ENCODE measurements at regions of chr6 and their contacts with region 1.

Region 1: DNA sequence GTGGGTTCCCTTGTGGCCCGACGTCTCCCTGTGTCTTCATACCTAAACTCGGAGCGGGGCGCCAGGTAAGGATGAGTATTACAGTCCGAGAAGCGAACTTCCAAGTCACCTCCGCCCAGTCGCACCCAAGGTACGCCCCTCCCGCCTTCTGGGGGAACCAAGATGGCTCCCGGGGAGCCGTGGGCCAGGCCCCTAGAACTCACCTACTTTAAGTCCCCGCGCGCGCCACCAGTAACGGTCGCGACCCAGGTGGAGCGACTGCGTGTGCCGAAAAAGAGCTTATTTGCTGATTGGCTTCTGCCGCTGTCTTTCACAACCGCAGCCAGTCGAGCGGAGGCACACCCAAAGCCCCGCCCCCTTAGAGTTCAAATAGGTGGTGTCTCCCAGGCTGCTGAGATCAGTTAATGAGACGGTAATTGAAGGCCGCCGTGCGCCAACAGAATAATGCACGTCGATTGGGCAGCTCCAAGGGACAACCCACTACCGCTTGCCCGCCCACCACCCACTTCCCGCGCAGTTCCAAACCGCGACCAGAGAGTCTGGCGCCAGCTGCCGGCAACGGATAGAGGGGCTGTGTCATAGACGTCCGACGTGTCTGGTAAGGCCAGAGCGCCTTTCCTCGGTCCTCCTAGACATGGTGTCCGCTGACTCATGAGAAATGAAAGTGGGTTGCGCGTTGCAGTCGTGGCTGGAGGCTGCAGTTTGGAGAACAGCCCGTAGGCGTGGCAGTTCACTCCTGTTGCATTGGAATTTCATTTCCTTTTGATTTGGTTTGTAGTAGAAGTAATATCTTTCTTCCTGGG is at the start of gene MDC1:
- DNase-seq: peak; percentile 99 to 100
- H3K4me3 ChIP-seq: peak within 1 kb of the TSS; percentile 56
- H3K4me3 Mint-ChIP-seq: peak within 1 kb of the TSS; percentile 95
- H3K27ac Mint-ChIP-seq: peak within 1 kb of the TSS; percentile 100
- H3K4me1 ChIP-seq: peaks cover 10% of the 10 kb centered on the region; the same call in 1 of the 2 replicates
- H3K4me1 Mint-ChIP-seq: peaks cover 14% of the 10 kb centered on the region
- H3K27me3 ChIP-seq: no peaks in the 10 kb centered on the region
- H3K27me3 Mint-ChIP-seq: no peaks in the 10 kb centered on the region
- CTCF ChIP-seq: peak; percentile 17 to 31
- total RNA-seq, gene MDC1: 46.6 and 48.6 TPM in 2 replicates

Region 2: GRCh38 chr6:30212865-30213666 is 504.2 kb before region 1 on chr6 and contains the start of gene TRIM26:
- CTCF ChIA-PET with region 1: no interaction called
- POLR2A ChIA-PET with region 1: no interaction called
- intact Hi-C with region 1: loop called (anchors 5 kb)
- DNase-seq: peak; percentile 98
- H3K4me3 ChIP-seq: peak within 1 kb of the TSS; percentile 90
- H3K4me3 Mint-ChIP-seq: peak within 1 kb of the TSS; percentile 93
- H3K27ac Mint-ChIP-seq: peak within 1 kb of the TSS; percentile 97
- H3K4me1 ChIP-seq: peaks cover 29% of the 10 kb centered on the region
- H3K4me1 Mint-ChIP-seq: peaks cover 26% of the 10 kb centered on the region
- H3K27me3 ChIP-seq: no peaks in the 10 kb centered on the region
- H3K27me3 Mint-ChIP-seq: no peaks in the 10 kb centered on the region
- CTCF ChIP-seq: no peak
- total RNA-seq, gene TRIM26: 48.1 and 49.0 TPM in 2 replicates

Region 3: DNA sequence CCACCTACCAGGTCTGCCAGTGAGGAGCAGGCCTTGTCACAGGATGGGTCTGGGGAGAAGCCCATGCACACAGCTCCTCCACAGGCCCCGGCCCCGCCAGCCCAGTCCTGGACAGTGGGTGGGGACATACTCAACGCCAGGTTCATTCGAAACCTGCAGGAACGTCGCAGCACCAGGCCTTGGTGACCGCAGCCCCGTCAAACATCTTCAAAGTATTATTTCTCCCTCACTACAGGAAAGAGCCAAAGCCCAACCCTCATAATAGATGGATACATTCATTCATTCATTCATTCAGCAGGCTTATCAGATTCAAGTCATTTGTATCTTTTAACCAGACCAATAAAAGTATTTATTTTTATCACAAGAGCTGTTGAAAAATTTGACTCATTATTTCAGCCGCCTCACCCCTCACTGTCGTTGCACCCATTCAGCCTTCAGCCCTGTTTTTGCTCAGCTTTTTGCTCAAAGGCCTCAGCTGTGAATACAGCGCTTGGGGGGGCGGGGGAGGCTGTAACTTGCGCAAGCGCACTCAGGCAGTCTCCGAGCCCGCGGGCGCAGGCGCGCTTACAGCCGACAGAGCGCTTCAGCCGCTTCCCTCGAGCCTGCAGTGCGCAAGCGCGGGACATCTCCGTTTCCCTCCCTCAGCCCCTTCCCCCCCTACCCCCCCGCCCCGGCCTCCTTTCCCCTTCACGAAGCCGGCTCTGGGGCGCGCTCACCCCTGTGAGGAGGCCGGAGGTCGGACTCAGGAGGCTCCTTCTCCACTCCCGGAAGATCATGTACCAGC is 70.6 kb before region 1 on chr6 and contains the start of gene C6orf136:
- CTCF ChIA-PET with region 1: no interaction called
- POLR2A ChIA-PET with region 1: interaction called, 9 read pairs
- intact Hi-C with region 1: loop called (anchors 2 kb)
- DNase-seq: peak; percentile 91 to 93
- H3K4me3 ChIP-seq: peak within 1 kb of the TSS; percentile 83
- H3K4me3 Mint-ChIP-seq: peak within 1 kb of the TSS; percentile 82
- H3K27ac Mint-ChIP-seq: peak within 1 kb of the TSS; percentile 67
- H3K4me1 ChIP-seq: no peaks in the 10 kb centered on the region
- H3K4me1 Mint-ChIP-seq: peaks cover 16% of the 10 kb centered on the region
- H3K27me3 ChIP-seq: no peaks in the 10 kb centered on the region
- H3K27me3 Mint-ChIP-seq: no peaks in the 10 kb centered on the region
- CTCF ChIP-seq: no peak
- total RNA-seq, gene C6orf136: 25.4 and 25.7 TPM in 2 replicates

Region 4: DNA sequence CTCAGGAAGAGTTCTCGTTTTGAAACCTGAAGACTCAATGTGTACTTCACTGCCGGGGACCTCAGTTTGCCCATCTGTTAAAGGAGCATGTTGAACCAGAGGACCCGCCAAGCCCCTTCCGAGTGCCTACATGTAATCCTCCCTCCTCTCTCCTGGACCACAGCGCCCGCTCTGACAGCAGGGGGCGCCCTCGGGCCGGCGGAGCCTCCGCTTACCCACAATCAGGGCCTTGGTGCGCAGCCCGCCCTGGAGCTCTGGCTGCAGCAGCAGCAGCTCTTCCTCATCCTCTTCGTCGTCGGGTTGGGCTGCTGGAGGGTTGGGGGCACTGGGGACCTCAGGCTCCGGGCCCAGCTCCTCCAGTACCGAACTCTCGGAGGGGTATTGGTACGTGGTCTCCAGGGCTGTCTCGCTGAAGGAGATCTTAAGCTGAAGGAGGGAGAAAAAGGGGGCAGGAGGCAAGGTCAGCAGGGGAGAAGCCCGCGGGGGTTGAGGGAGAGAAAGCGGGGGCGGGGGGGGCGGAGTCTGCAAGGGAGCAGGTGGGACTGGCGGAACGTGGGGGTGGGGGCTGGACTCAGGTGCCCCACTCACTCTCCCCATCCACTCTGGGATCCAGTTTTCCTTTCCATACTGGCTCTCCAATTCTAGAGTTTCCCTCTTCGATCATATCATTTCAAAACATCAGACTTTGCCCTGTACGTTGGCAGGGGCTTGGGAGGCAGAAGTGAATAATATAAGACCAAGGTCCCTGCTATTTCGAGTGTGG is 38.1 kb before region 1 on chr6:
- CTCF ChIA-PET with region 1: interaction called, 28 read pairs
- POLR2A ChIA-PET with region 1: interaction called, 4 read pairs
- intact Hi-C with region 1: loop called (anchors 1 kb)
- DNase-seq: peak; percentile 68 to 86
- H3K4me3 ChIP-seq: no peak overlapping the region
- H3K4me3 Mint-ChIP-seq: no peak overlapping the region
- H3K27ac Mint-ChIP-seq: no peak overlapping the region
- H3K4me1 ChIP-seq: 0 out of 2 replicates have a peak, but pooled peaks cover 4% of the 10 kb centered on the region
- H3K4me1 Mint-ChIP-seq: peaks cover 4% of the 10 kb centered on the region
- H3K27me3 ChIP-seq: no peaks in the 10 kb centered on the region
- H3K27me3 Mint-ChIP-seq: no peaks in the 10 kb centered on the region
- CTCF ChIP-seq: peak; percentile 81 to 95

Region 5: GRCh38 chr6:30742316-30743098 is 25.3 kb after region 1 on chr6 and contains the start of gene FLOT1:
- CTCF ChIA-PET with region 1: no interaction called
- POLR2A ChIA-PET with region 1: no interaction called
- intact Hi-C with region 1: loop called (anchors 2 kb)
- DNase-seq: peak; percentile 96 to 97
- H3K4me3 ChIP-seq: peak within 1 kb of the TSS; percentile 48
- H3K4me3 Mint-ChIP-seq: peak within 1 kb of the TSS; percentile 90
- H3K27ac Mint-ChIP-seq: peak within 1 kb of the TSS; percentile 82
- H3K4me1 ChIP-seq: peaks cover 19% of the 10 kb centered on the region
- H3K4me1 Mint-ChIP-seq: peaks cover 25% of the 10 kb centered on the region
- H3K27me3 ChIP-seq: no peaks in the 10 kb centered on the region
- H3K27me3 Mint-ChIP-seq: no peaks in the 10 kb centered on the region
- CTCF ChIP-seq: no peak
- total RNA-seq, gene FLOT1: 101 and 113 TPM in 2 replicates